Dorsolateral prefrontal cortex (tissue), 120 donors: ENCODE measurements at regions of chr19 and their contacts with region 1.

Region 1: DNA sequence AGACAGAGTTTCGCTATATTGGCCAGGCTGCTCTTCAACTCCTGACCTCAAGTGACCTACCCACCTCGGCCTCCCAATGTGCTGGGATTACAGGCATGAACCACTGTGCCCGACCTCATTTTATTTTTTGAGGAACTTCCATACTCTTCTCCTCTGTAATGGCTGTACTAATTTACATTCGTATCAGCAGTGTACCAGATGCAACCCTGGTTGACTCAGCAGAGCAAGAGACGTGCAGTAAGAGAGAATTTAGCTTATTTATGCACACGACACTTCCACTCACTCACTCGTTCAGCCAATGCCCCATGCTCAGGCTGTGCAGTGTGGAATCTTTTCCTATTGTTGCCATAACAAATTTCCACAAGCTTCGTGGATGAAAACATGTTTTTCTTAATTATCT is 6.9 kb downstream of the KIR3DL3 start:
- DNase-seq: no peak
- H3K4me3 ChIP-seq: no peak overlapping the region
- H3K27ac ChIP-seq: no peak overlapping the region
- H3K27me3 ChIP-seq: peaks cover 0 to 11% (median 0%) of the 10 kb centered on the region in 45 donors
- CTCF ChIP-seq: no peak

Region 2: DNA sequence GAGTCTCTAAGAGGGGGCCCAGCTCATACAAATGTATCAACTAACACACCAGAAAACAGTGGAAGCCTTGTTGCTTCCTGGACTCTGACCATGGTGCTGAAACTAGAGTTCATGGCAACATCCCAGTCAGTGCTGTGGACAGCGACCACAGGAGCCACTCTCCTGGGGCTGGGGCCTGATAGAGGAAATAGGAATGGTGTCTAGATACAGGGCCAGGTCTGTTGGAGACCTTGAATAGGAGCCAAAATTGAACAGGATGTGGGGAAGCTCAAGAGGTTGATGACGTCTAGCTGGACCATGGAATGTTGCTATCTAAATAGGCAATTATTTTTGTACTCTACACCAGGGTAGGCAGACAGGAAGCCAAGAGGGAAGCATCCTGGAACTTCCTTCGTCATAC is 46.7 kb before region 1 on chr19:
- intact Hi-C with region 1: no loop called
- DNase-seq: no peak
- H3K4me3 ChIP-seq: no peak overlapping the region
- H3K27ac ChIP-seq: no peak overlapping the region
- H3K27me3 ChIP-seq: peaks cover 0 to 38% (median 5%) of the 10 kb centered on the region in 45 donors
- CTCF ChIP-seq: no peak

Region 3: GRCh38 chr19:54696117-54696548 is 35.1 kb before region 1 on chr19:
- intact Hi-C with region 1: no loop called
- DNase-seq: no peak
- H3K4me3 ChIP-seq: no peak overlapping the region
- H3K27ac ChIP-seq: no peak overlapping the region
- H3K27me3 ChIP-seq: peaks cover 0 to 35% (median 7%) of the 10 kb centered on the region in 45 donors
- CTCF ChIP-seq: no peak

Region 4: GRCh38 chr19:54851353-54851752 is 120.2 kb after region 1 on chr19:
- intact Hi-C with region 1: loop called in 1 of 2 experiments (anchors 10 kb)
- DNase-seq: no peak
- H3K4me3 ChIP-seq: no peak overlapping the region
- H3K27ac ChIP-seq: no peak overlapping the region
- H3K27me3 ChIP-seq: peaks cover 0 to 24% (median 3%) of the 10 kb centered on the region in 45 donors
- CTCF ChIP-seq: no peak